MCF 10A (cell line): ENCODE measurements at regions of chr10 and their contacts with region 1.

Region 1: GRCh38 chr10:91597197-91597881 is 35.5 kb downstream of the PPP1R3C start:
- DNase-seq: peak; percentile 39
- H3K4me3 Mint-ChIP-seq: no peak overlapping the region
- H3K27ac Mint-ChIP-seq: peak overlapping the region; percentile 76
- H3K4me1 Mint-ChIP-seq: peaks cover 26% of the 10 kb centered on the region
- H3K27me3 Mint-ChIP-seq: no peaks in the 10 kb centered on the region
- CTCF ChIP-seq: no peak

Region 2: GRCh38 chr10:91088300-91089140 is 508.8 kb before region 1 on chr10:
- CTCF ChIA-PET with region 1: no interaction called
- POLR2A ChIA-PET with region 1: no interaction called
- intact Hi-C with region 1: no loop called
- DNase-seq: peak; percentile 27
- H3K4me3 Mint-ChIP-seq: no peak overlapping the region
- H3K27ac Mint-ChIP-seq: no peak overlapping the region
- H3K4me1 Mint-ChIP-seq: peaks cover 5% of the 10 kb centered on the region
- H3K27me3 Mint-ChIP-seq: no peaks in the 10 kb centered on the region
- CTCF ChIP-seq: peak; percentile 28

Region 3: GRCh38 chr10:91607646-91608403 is 10.5 kb after region 1 on chr10:
- CTCF ChIA-PET with region 1: no interaction called
- POLR2A ChIA-PET with region 1: interaction called, 11 read pairs
- intact Hi-C with region 1: no loop called
- DNase-seq: no peak
- H3K4me3 Mint-ChIP-seq: no peak overlapping the region
- H3K27ac Mint-ChIP-seq: no peak overlapping the region
- H3K4me1 Mint-ChIP-seq: peaks cover 31% of the 10 kb centered on the region
- H3K27me3 Mint-ChIP-seq: no peaks in the 10 kb centered on the region
- CTCF ChIP-seq: no peak

Region 4: GRCh38 chr10:91617073-91617580 is 19.8 kb after region 1 on chr10:
- CTCF ChIA-PET with region 1: no interaction called
- POLR2A ChIA-PET with region 1: interaction called, 7 read pairs
- intact Hi-C with region 1: loop called (anchors 1 kb)
- DNase-seq: peak; percentile 76
- H3K4me3 Mint-ChIP-seq: peak overlapping the region; percentile 60
- H3K27ac Mint-ChIP-seq: peak overlapping the region; percentile 87
- H3K4me1 Mint-ChIP-seq: peaks cover 27% of the 10 kb centered on the region
- H3K27me3 Mint-ChIP-seq: no peaks in the 10 kb centered on the region
- CTCF ChIP-seq: no peak